OCI-LY7 (cell line): ENCODE measurements at regions of chr7 and their contacts with region 1.

Region 1: GRCh38 chr7:113289140-113289740 is 170.9 kb upstream of the SMIM30 start:
- DNase-seq: peak; percentile 42
- H3K4me3 ChIP-seq: no peak overlapping the region
- H3K27ac ChIP-seq: no peak overlapping the region
- H3K4me1 ChIP-seq: no peaks in the 10 kb centered on the region
- CTCF ChIP-seq: peak; percentile 72

Region 2: GRCh38 chr7:113015032-113015645 is 274.1 kb before region 1 on chr7:
- CTCF ChIA-PET with region 1: no interaction called
- POLR2A ChIA-PET with region 1: no interaction called
- intact Hi-C with region 1: loop called (anchors 5 kb)
- DNase-seq: peak; percentile 6
- H3K4me3 ChIP-seq: no peak overlapping the region
- H3K27ac ChIP-seq: no peak overlapping the region
- H3K4me1 ChIP-seq: no peaks in the 10 kb centered on the region
- CTCF ChIP-seq: peak; percentile 73

Region 3: DNA sequence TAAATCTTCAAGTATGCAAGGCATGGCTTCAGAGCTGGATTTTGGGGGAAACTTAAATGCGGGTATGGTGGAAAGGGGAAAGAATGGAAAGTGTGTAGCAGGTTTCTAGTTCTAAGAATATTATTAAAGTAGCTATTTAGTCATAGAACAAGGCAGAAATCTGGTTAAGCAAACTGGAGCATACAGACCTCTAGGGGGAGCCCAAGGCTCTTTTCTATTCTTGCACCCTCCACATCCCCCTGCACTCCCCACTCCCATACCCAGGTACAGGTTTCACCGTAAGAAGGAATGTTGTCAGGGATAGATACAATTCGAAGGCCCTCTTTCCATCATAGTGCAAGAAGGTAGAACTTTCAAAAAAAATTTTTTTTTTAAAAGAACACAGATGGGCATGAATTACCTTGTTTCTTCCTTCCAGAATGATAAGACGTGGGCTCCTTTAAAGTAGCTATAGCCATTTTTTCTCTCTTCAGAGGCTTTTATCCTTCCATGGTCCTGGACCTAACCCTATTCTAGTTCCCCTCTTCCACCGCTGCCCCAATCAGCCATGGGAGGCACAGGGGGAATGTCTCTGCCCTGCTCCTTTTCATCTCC is 129.4 kb before region 1 on chr7:
- CTCF ChIA-PET with region 1: no interaction called
- POLR2A ChIA-PET with region 1: no interaction called
- intact Hi-C with region 1: loop called (anchors 5 kb)
- DNase-seq: peak; percentile 41
- H3K4me3 ChIP-seq: no peak overlapping the region
- H3K27ac ChIP-seq: no peak overlapping the region
- H3K4me1 ChIP-seq: no peaks in the 10 kb centered on the region
- CTCF ChIP-seq: peak; percentile 84

Region 4: GRCh38 chr7:113582471-113582870 is 293.2 kb after region 1 on chr7:
- CTCF ChIA-PET with region 1: no interaction called
- POLR2A ChIA-PET with region 1: no interaction called
- intact Hi-C with region 1: no loop called
- DNase-seq: no peak
- H3K4me3 ChIP-seq: no peak overlapping the region
- H3K27ac ChIP-seq: no peak overlapping the region
- H3K4me1 ChIP-seq: no peaks in the 10 kb centered on the region
- CTCF ChIP-seq: no peak